Heart right ventricle (tissue), 16 donors: ENCODE measurements at regions of chr4 and their contacts with region 1.

Region 1: GRCh38 chr4:176277162-176277904 is 8.3 kb upstream of the ASB5 start:
- DNase-seq: peak; percentile 44 to 51
- ATAC-seq: peak in 7 of 8 donors; percentile 73 to 90 (median 81)
- H3K4me3 ChIP-seq: peak overlapping the region in 2 of 10 donors; percentile 21 to 30
- H3K27ac ChIP-seq: no peak overlapping the region
- H3K4me1 ChIP-seq: peaks cover 0 to 6% (median 0%) of the 10 kb centered on the region in 9 donors
- H3K27me3 ChIP-seq: no peaks in the 10 kb centered on the region
- CTCF ChIP-seq: peak; percentile 13 to 72 (median 54)

Region 2: GRCh38 chr4:175109933-175110332 is 1167.4 kb before region 1 on chr4:
- intact Hi-C with region 1: no loop called
- DNase-seq: no peak
- ATAC-seq: no peak
- H3K4me3 ChIP-seq: no peak overlapping the region
- H3K27ac ChIP-seq: no peak overlapping the region
- H3K4me1 ChIP-seq: no peaks in the 10 kb centered on the region
- H3K27me3 ChIP-seq: no peaks in the 10 kb centered on the region
- CTCF ChIP-seq: no peak

Region 3: GRCh38 chr4:176150356-176150682 is 127.0 kb before region 1 on chr4:
- intact Hi-C with region 1: loop called in 9 of 10 experiments (anchors 1 to 5 kb)
- DNase-seq: no peak
- ATAC-seq: peak in 2 of 8 donors; percentile 61 to 64
- H3K4me3 ChIP-seq: no peak overlapping the region
- H3K27ac ChIP-seq: no peak overlapping the region
- H3K4me1 ChIP-seq: no peaks in the 10 kb centered on the region
- H3K27me3 ChIP-seq: no peaks in the 10 kb centered on the region
- CTCF ChIP-seq: peak; percentile 13 to 68 (median 44)

Region 4: GRCh38 chr4:176238157-176238610 is 39.1 kb before region 1 on chr4:
- intact Hi-C with region 1: loop called in 2 of 10 experiments (anchors 2 to 5 kb)
- DNase-seq: peak in 1 of 2 donors; percentile 14
- ATAC-seq: peak; percentile 74 to 95 (median 85)
- H3K4me3 ChIP-seq: peak overlapping the region in 5 of 10 donors; percentile 3 to 31 (median 24)
- H3K27ac ChIP-seq: peak overlapping the region; percentile 63 to 92 (median 84)
- H3K4me1 ChIP-seq: peaks cover 0 to 26% (median 12%) of the 10 kb centered on the region in 9 donors
- H3K27me3 ChIP-seq: no peaks in the 10 kb centered on the region
- CTCF ChIP-seq: no peak